ENCODE measurements at regions of chr10 and their contacts with region 1.

Region 1: GRCh38 chr10:61733358-61733940 is 70.7 kb downstream of the CABCOCO1 start:
- DNase-seq: peak; percentile 29 to 78 (median 38)
- ATAC-seq: peak; percentile 88
- H3K4me3 ChIP-seq: no peak overlapping the region
- H3K27ac ChIP-seq: no peak overlapping the region
- H3K4me1 ChIP-seq: 0 out of 5 replicates have a peak, but pooled peaks cover 0 to 4% of the 10 kb centered on the region in 2 experiments
- H3K27me3 ChIP-seq: no peaks in the 10 kb centered on the region
- CTCF ChIP-seq: peak; percentile 63 to 73 (median 65); a peak in 5 of 6 replicates
- EP300 ChIP-seq: no peak
- POLR2A ChIP-seq: no peak
- RAD21 ChIP-seq: peak; percentile 81 to 87

Region 2: DNA sequence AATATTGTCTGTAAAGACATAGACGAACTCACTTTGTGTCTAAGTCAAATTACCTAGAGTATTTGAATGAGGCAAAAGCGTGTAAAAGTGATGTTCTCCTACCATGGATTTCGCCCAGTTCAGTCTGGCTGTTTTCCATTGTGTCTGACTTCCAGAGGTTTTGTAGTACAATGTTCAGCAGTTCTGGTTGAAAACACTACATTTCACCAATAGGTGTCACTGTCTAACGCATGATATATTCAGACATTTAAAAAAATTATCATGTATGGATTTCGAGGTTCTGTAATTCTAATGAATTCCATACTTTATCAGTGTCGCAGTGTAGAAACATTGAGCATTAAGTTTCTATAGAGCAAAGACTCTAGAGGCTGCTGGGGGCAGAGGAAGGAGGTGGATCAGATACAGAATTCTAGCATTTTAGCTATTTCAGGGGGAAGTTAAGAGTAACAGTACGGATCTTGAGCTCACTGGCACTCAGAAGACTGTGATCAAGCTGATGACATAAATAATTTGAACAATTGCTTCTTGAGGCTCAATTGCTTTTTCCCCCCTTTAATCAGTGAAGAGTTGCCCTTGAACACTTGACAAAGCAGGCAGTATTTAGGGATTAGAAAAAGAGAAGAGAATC is 592.6 kb before region 1 on chr10:
- CTCF ChIA-PET with region 1: interaction called, 7 read pairs
- POLR2A ChIA-PET with region 1: no interaction called
- in situ Hi-C with region 1: no loop called
- intact Hi-C with region 1: loop called (anchors 10 kb)
- DNase-seq: peak; percentile 27 to 62 (median 38)
- ATAC-seq: peak; percentile 83
- H3K4me3 ChIP-seq: no peak overlapping the region
- H3K27ac ChIP-seq: no peak overlapping the region
- H3K4me1 ChIP-seq: no peaks in the 10 kb centered on the region
- H3K27me3 ChIP-seq: no peaks in the 10 kb centered on the region
- CTCF ChIP-seq: peak; percentile 52 to 79 (median 67); a peak in 5 of 6 replicates
- EP300 ChIP-seq: no peak
- POLR2A ChIP-seq: no peak
- RAD21 ChIP-seq: peak; percentile 70 to 79

Region 3: DNA sequence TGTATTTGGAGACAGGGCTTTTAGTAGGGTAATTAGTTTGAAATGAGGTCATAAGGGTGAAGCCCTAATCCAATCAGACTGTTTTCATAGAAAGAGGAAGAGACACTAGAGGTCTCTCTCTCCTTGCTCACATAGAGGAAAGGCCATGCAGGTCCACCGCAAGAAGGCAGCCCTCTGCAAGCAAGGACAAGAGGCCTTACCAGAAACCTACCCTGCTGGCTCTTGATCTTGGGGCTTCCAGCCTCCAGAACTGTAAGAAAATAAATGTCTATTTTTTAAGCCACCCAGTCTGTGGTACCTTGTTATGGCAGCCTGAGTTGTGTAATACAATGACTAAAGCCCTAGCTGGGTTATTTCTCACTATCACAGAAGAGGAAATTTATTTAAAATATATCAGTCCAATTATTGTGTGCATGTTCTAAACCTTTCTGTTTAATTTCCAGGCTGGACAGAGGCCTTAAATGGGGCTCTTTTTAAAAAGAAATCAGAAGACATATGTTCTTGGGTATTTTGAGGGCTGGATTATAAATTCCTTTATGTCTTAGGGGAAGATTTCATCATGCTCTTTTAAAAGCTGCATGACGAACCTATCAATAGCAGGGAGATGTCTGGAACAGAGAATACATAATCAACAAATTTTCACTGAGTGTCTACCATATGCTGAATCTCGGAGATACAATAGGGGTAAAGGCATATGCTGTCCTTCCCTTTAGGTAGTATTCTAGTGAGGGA is 267.4 kb before region 1 on chr10:
- CTCF ChIA-PET with region 1: no interaction called
- POLR2A ChIA-PET with region 1: no interaction called
- in situ Hi-C with region 1: no loop called
- intact Hi-C with region 1: loop called (anchors 1 kb)
- DNase-seq: peak in 2 of 4 experiments; percentile 28 to 68
- ATAC-seq: peak; percentile 95
- H3K4me3 ChIP-seq: no peak overlapping the region
- H3K27ac ChIP-seq: no peak overlapping the region
- H3K4me1 ChIP-seq: no peaks in the 10 kb centered on the region; a peak in 1 of 5 replicates
- H3K27me3 ChIP-seq: no peaks in the 10 kb centered on the region
- CTCF ChIP-seq: peak; percentile 46 to 97 (median 96); a peak in 5 of 6 replicates
- EP300 ChIP-seq: no peak
- POLR2A ChIP-seq: no peak
- RAD21 ChIP-seq: peak; percentile 88 to 97

Region 4: DNA sequence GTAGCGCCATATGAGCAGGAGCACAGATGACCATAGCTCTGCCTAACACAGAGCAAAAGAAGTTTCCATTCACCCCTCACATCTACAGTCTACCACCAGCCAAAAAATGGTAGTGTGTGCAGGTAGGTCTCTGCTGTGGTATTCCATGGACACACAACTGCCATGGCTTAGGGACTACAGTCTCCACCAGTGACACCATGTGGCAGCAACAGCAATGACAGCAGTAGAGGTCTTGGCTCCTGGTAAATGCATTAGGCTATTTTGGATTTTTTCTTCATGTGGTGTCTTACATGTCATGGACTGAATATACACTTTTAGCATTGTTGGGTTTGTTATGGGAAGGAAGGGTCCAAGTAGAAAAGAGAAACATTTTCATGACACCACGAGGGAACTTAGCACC is 140.9 kb before region 1 on chr10:
- CTCF ChIA-PET with region 1: no interaction called
- POLR2A ChIA-PET with region 1: no interaction called
- in situ Hi-C with region 1: no loop called
- intact Hi-C with region 1: loop called (anchors 5 kb)
- DNase-seq: peak; percentile 21 to 73 (median 45)
- ATAC-seq: peak; percentile 94
- H3K4me3 ChIP-seq: no peak overlapping the region
- H3K27ac ChIP-seq: no peak overlapping the region
- H3K4me1 ChIP-seq: peaks cover 0 to 12% of the 10 kb centered on the region in 2 experiments; a peak in 3 of 5 replicates
- H3K27me3 ChIP-seq: no peaks in the 10 kb centered on the region
- CTCF ChIP-seq: peak; percentile 74 to 77 (median 75)
- EP300 ChIP-seq: no peak
- POLR2A ChIP-seq: no peak
- RAD21 ChIP-seq: peak; percentile 77 to 92

Region 5: DNA sequence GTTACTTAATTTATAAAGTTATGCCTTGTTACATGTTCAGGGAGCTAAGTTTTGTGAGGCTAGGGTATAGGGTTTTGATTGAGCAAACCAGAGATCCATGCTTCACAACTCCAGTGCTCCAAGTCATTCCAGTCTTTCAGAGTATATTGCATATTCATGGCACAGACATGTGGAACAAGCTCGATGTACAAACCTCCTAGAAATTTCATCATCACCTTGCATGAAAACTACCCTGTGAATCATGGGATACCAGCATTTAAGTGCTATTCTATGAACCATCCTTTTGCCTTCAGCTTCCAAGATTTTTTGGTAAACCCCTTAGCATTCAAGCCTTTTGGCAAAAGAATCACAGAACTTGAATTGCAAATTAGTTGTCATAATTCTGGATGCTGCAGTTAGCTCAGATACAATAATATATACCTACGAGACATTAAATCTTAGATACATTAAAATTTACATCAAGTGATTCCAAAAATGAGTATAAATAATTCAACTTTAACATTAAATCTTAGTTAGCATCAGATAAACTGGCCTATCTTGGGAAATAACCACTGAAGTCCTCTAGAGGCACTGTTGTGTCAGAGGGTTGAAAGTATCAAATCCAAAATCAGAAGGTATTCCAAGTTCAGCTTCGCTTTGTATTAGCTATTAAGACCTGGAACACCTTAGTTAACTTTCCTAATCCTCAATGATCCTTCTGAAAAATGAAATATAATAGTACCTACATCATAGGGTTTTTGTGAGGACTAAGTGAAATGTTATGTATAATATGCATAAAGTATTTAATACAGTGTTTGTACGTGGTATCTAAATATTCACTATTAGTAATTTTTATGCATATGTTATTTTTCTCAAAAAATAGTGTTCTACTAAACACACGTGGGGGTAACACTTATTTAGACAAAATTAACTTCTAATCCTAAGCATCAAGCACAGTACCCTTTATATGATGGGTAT is 126.2 kb before region 1 on chr10:
- CTCF ChIA-PET with region 1: no interaction called
- POLR2A ChIA-PET with region 1: no interaction called
- in situ Hi-C with region 1: no loop called
- intact Hi-C with region 1: loop called (anchors 2 kb)
- DNase-seq: peak; percentile 20 to 32 (median 27)
- ATAC-seq: peak; percentile 75
- H3K4me3 ChIP-seq: no peak overlapping the region
- H3K27ac ChIP-seq: no peak overlapping the region
- H3K4me1 ChIP-seq: no peaks in the 10 kb centered on the region
- H3K27me3 ChIP-seq: no peaks in the 10 kb centered on the region
- CTCF ChIP-seq: peak; percentile 47 to 65 (median 59); a peak in 5 of 6 replicates
- EP300 ChIP-seq: no peak
- POLR2A ChIP-seq: no peak
- RAD21 ChIP-seq: peak in 1 of 2 experiments; percentile 55; a peak in 3 of 4 replicates

Region 6: GRCh38 chr10:61618388-61618961 is 115.0 kb before region 1 on chr10:
- CTCF ChIA-PET with region 1: no interaction called
- POLR2A ChIA-PET with region 1: no interaction called
- in situ Hi-C with region 1: no loop called
- intact Hi-C with region 1: no loop called
- DNase-seq: no peak
- ATAC-seq: no peak
- H3K4me3 ChIP-seq: no peak overlapping the region
- H3K27ac ChIP-seq: no peak overlapping the region
- H3K4me1 ChIP-seq: no peaks in the 10 kb centered on the region
- H3K27me3 ChIP-seq: no peaks in the 10 kb centered on the region; a peak in 1 of 5 replicates
- CTCF ChIP-seq: no peak
- EP300 ChIP-seq: no peak
- POLR2A ChIP-seq: no peak
- RAD21 ChIP-seq: no peak

Region 7: DNA sequence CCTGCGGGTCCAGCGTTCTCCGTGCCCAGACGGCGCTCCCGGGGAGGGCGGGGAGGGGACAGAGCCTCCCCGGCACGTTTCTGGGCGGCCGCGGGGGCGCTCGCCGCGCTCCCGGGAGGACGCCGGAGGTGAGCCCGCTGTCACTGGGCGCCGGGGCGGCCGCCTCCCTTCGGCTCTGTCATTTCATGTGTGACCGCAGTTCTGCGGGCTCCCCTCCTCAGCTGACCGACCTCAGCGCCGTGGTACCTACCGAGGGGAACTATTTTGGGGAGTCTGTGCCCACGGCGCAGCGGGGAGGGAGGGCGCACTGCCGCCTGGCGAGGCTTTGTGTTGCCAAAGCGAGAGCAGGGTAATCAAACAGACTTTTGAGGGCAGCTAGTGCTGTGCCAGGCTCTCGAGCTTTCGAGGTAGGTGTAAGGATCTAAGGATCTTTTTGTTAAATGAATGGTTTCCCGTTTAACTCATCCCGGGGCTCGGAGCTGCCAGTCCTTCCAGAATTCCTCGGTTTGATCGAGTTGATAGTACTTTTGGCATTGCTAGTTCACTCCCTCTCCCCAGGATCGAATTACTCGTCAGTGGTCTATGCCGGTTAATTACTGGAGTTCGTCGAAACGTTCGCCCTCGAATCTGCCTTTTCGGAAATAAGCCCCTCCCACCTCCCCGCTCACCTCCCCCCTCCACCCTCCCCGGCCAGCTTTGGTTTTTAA is 169.9 kb after region 1 on chr10:
- CTCF ChIA-PET with region 1: no interaction called
- POLR2A ChIA-PET with region 1: no interaction called
- in situ Hi-C with region 1: no loop called
- intact Hi-C with region 1: loop called (anchors 5 kb)
- DNase-seq: peak; percentile 69 to 80 (median 72)
- ATAC-seq: peak; percentile 85
- H3K4me3 ChIP-seq: peak overlapping the region; percentile 51
- H3K27ac ChIP-seq: peak overlapping the region; percentile 40; the same call in 2 of the 3 replicates
- H3K4me1 ChIP-seq: peaks cover 6 to 12% of the 10 kb centered on the region in 2 experiments
- H3K27me3 ChIP-seq: no peaks in the 10 kb centered on the region
- CTCF ChIP-seq: peak in 2 of 3 experiments; percentile 4 to 39; a peak in 3 of 6 replicates
- EP300 ChIP-seq: no peak
- POLR2A ChIP-seq: no peak
- RAD21 ChIP-seq: no peak

Region 8: DNA sequence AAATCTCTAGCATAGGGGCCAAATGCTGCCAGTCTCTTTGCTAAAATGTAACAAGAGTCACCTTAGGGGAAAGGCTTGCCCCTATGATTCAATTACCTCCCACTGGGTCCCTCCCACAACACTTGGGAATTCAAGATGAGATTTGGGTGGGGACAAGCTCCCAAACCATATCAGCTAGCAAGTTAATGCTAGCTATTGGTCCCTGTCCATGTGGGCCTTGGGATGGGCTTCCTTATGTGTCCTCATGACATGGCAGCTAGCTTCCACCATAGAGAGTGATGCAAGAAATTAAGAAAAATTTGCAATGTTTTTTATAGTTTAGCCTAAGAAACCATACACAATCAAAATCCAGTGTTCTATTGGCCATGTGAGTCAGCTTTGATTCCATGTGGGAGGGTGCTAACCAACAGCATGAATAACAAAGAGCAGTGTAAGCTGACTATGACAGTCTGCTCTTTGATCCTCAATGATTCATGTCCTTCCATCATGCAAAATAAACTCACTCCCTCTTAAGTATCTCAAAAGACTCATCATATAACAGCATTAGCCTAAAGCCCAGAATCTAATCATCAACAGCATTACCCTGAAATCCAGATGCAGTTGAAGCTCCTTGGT is 619.0 kb after region 1 on chr10:
- CTCF ChIA-PET with region 1: no interaction called
- POLR2A ChIA-PET with region 1: no interaction called
- in situ Hi-C with region 1: no loop called
- intact Hi-C with region 1: no loop called
- DNase-seq: no peak
- ATAC-seq: no peak
- H3K4me3 ChIP-seq: no peak overlapping the region
- H3K27ac ChIP-seq: no peak overlapping the region
- H3K4me1 ChIP-seq: no peaks in the 10 kb centered on the region
- H3K27me3 ChIP-seq: no peaks in the 10 kb centered on the region
- CTCF ChIP-seq: no peak
- EP300 ChIP-seq: no peak
- POLR2A ChIP-seq: no peak
- RAD21 ChIP-seq: no peak